HAP-1 (cell line): ENCODE measurements at regions of chr17 and their contacts with region 1.

Region 1: GRCh38 chr17:59004338-59005111 is 102.2 kb downstream of the TRIM37 start:
- DNase-seq: peak; percentile 76 to 77
- H3K4me3 ChIP-seq: no peak overlapping the region
- H3K4me1 ChIP-seq: peaks cover 23% of the 10 kb centered on the region
- H3K27me3 ChIP-seq: no peaks in the 10 kb centered on the region

Region 2: GRCh38 chr17:58520843-58521430 is 483.6 kb before region 1 on chr17:
- in situ Hi-C with region 1: loop called (anchors 5 kb)
- DNase-seq: peak; percentile 18 to 62
- H3K4me3 ChIP-seq: no peak overlapping the region
- H3K4me1 ChIP-seq: peaks cover 11% of the 10 kb centered on the region
- H3K27me3 ChIP-seq: no peaks in the 10 kb centered on the region

Region 3: DNA sequence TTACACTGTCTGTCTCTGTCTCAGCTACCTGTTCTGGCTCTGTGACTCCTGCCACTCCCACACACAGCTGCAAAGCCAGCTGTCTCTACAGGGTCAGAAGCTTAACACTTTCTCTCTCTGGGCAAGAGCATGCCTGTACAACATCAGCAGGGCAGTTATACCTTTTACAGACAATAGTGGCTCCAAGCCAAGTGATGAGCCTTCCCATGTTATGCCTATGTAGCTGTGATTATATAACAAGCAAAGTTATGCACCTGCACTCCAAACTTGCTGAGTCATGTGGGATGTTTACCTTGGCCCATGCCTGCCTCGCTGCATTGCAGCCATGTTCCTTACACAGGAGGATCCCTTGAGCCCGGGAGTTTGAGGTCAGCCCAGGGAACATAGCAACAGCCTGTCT is 1553.3 kb after region 1 on chr17:
- in situ Hi-C with region 1: no loop called
- DNase-seq: no peak
- H3K4me3 ChIP-seq: no peak overlapping the region
- H3K4me1 ChIP-seq: no peaks in the 10 kb centered on the region
- H3K27me3 ChIP-seq: no peaks in the 10 kb centered on the region

Region 4: DNA sequence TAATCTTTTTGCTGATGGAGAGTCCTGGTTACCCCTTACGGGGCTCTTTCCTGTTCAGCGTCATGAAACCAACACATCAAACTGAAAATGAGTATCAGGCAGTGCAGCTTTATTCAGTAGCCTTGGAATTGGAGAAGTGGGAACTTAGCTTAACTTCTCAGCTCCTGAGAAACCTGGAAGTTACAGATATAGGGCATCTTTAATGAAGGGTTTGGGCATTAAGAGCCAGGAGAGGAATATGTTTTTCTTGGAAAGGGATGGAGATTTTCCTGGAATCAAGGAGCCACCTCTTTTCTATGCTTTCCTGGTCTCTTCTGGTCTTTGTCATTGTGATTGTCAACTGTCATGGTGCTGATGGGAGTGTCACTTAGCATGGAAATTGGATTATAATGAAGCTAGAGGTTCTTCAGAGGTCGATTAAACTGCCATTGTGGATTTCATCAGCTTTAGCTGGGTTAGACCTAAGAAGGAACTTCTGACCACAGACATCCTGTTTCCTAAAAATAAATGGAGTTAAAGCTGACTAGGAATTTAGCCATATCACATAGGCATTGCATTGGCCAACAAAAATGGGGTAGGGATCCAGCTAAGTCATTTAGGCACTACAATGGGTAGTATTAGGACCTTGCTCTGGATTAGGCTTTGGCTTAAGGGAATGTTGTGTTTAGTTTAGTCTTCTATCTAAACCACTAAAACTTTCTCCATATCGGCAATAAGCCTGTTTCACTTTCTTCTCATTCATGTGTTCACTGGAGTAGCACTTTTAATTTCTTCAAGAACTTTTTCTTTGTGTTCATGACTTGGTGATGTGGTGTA is 1859.6 kb after region 1 on chr17:
- in situ Hi-C with region 1: no loop called
- DNase-seq: no peak
- H3K4me3 ChIP-seq: no peak overlapping the region
- H3K4me1 ChIP-seq: no peaks in the 10 kb centered on the region
- H3K27me3 ChIP-seq: no peaks in the 10 kb centered on the region